ENCODE measurements at regions of chr16 and their contacts with region 1.

Region 1: GRCh38 chr16:67719048-67719777 is at the start of gene GFOD2:
- DNase-seq: peak; percentile 98
- ATAC-seq: peak; percentile 94
- H3K4me3 Mint-ChIP-seq: peak within 1 kb of the TSS; percentile 97
- H3K27ac Mint-ChIP-seq: peak within 1 kb of the TSS; percentile 98
- H3K4me1 Mint-ChIP-seq: peaks cover 37% of the 10 kb centered on the region
- H3K27me3 Mint-ChIP-seq: no peaks in the 10 kb centered on the region
- CTCF ChIP-seq: no peak
- total RNA-seq, gene GFOD2: 9.7 and 12.6 TPM in 2 replicates

Region 2: GRCh38 chr16:67672739-67673662 is 46.2 kb before region 1 on chr16:
- CTCF ChIA-PET with region 1: interaction called, 3 read pairs
- POLR2A ChIA-PET with region 1: interaction called, 8 read pairs
- intact Hi-C with region 1: loop called (anchors 2 kb)
- DNase-seq: no peak
- ATAC-seq: peak; percentile 42
- H3K4me3 Mint-ChIP-seq: no peak overlapping the region
- H3K27ac Mint-ChIP-seq: peak overlapping the region; percentile 3
- H3K4me1 Mint-ChIP-seq: peaks cover 42% of the 10 kb centered on the region
- H3K27me3 Mint-ChIP-seq: no peaks in the 10 kb centered on the region
- CTCF ChIP-seq: no peak

Region 3: GRCh38 chr16:67685388-67686112 is 33.7 kb before region 1 on chr16:
- CTCF ChIA-PET with region 1: no interaction called
- POLR2A ChIA-PET with region 1: interaction called, 10 read pairs
- intact Hi-C with region 1: no loop called
- DNase-seq: no peak
- ATAC-seq: peak; percentile 92
- H3K4me3 Mint-ChIP-seq: peak overlapping the region; percentile 53
- H3K27ac Mint-ChIP-seq: peak overlapping the region; percentile 77
- H3K4me1 Mint-ChIP-seq: peaks cover 27% of the 10 kb centered on the region
- H3K27me3 Mint-ChIP-seq: no peaks in the 10 kb centered on the region
- CTCF ChIP-seq: no peak

Region 4: DNA sequence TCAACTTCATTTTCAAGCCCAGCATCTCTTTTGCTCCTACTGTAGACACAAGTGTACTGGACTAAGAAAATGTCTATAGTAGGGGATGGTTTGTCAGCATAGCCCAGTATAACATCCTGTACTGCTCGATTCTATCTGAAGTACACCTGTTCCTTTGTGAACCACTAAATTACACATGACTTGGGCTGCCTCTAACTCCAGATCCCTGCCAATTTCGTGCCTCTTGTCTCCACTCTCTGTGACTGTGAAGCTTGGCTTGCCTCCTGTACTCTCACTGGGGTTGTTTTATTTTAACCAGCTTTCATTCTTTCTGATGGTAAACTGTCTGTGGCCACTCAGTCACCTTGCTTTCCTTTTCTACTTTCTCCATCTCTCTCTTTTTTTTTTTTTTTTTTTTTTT is 24.6 kb before region 1 on chr16:
- CTCF ChIA-PET with region 1: no interaction called
- POLR2A ChIA-PET with region 1: interaction called, 13 read pairs
- intact Hi-C with region 1: no loop called
- DNase-seq: no peak
- ATAC-seq: no peak
- H3K4me3 Mint-ChIP-seq: no peak overlapping the region
- H3K27ac Mint-ChIP-seq: no peak overlapping the region
- H3K4me1 Mint-ChIP-seq: peaks cover 20% of the 10 kb centered on the region
- H3K27me3 Mint-ChIP-seq: no peaks in the 10 kb centered on the region
- CTCF ChIP-seq: no peak

Region 5: GRCh38 chr16:67800338-67800926 is 81.2 kb after region 1 on chr16:
- CTCF ChIA-PET with region 1: interaction called, 4 read pairs
- POLR2A ChIA-PET with region 1: interaction called, 20 read pairs
- intact Hi-C with region 1: no loop called
- DNase-seq: no peak
- ATAC-seq: no peak
- H3K4me3 Mint-ChIP-seq: no peak overlapping the region
- H3K27ac Mint-ChIP-seq: peak overlapping the region; percentile 56
- H3K4me1 Mint-ChIP-seq: peaks cover 72% of the 10 kb centered on the region
- H3K27me3 Mint-ChIP-seq: no peaks in the 10 kb centered on the region
- CTCF ChIP-seq: no peak

Region 6: GRCh38 chr16:67841764-67842508 is 122.7 kb after region 1 on chr16 and contains the start of gene THAP11:
- CTCF ChIA-PET with region 1: no interaction called
- POLR2A ChIA-PET with region 1: interaction called, 7 read pairs
- intact Hi-C with region 1: loop called (anchors 1 kb)
- DNase-seq: peak; percentile 95
- ATAC-seq: peak; percentile 54
- H3K4me3 Mint-ChIP-seq: peak within 1 kb of the TSS; percentile 95
- H3K27ac Mint-ChIP-seq: peak within 1 kb of the TSS; percentile 95
- H3K4me1 Mint-ChIP-seq: peaks cover 43% of the 10 kb centered on the region
- H3K27me3 Mint-ChIP-seq: no peaks in the 10 kb centered on the region
- CTCF ChIP-seq: peak; percentile 38
- total RNA-seq, gene THAP11: 24.2 and 24.9 TPM in 2 replicates

Measured in activated B cell treated with CpG ODN at 0.5 μM for 24 hours (primary cell).